Activated CD8-positive, alpha-beta memory T cell treated with anti-CD3 and anti-CD28 coated beads, Interleukin-2, amount 10 ng/mL, durations not matched to agents 7 days and 5 days (primary cell): ENCODE measurements at regions of chr10 and their contacts with region 1.

Region 1: GRCh38 chr10:29735596-29736318 is 101.0 kb upstream of the SVIL start:
- DNase-seq: peak; percentile 82
- ATAC-seq: peak; percentile 93
- H3K4me3 Mint-ChIP-seq: peak overlapping the region; percentile 61
- H3K27ac Mint-ChIP-seq: no peak overlapping the region
- H3K4me1 Mint-ChIP-seq: peaks cover 8% of the 10 kb centered on the region
- H3K27me3 Mint-ChIP-seq: peaks cover 46% of the 10 kb centered on the region

Region 2: GRCh38 chr10:29681676-29682448 is 53.9 kb before region 1 on chr10:
- CTCF ChIA-PET with region 1: interaction called, 10 read pairs
- DNase-seq: peak; percentile 82
- ATAC-seq: peak; percentile 98
- H3K4me3 Mint-ChIP-seq: peak overlapping the region; percentile 10
- H3K27ac Mint-ChIP-seq: peak overlapping the region; percentile 82
- H3K4me1 Mint-ChIP-seq: peaks cover 19% of the 10 kb centered on the region
- H3K27me3 Mint-ChIP-seq: no peaks in the 10 kb centered on the region

Region 3: DNA sequence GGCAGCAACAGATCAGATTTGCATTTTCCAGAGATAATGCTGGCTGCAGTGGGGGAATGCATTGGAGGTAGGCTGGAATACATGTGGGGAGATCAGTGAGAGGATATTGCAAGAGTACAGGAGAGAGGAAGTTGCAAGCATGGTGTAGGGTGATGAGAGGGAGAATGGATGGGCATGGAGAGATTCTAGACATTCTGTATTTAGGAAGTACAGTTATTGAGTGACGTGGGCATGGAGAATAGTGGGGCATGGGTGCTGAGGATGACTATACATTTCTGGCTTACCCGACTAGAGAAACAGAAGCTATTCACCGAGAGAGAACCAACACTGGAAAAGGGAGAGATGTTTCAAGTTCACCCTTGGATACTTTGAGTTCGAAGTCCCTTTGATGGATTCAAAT is 15.9 kb after region 1 on chr10:
- CTCF ChIA-PET with region 1: no interaction called
- DNase-seq: no peak
- ATAC-seq: no peak
- H3K4me3 Mint-ChIP-seq: no peak overlapping the region
- H3K27ac Mint-ChIP-seq: no peak overlapping the region
- H3K4me1 Mint-ChIP-seq: no peaks in the 10 kb centered on the region
- H3K27me3 Mint-ChIP-seq: peaks cover 11% of the 10 kb centered on the region